ENCODE measurements at regions of chr2 and their contacts with region 1.

Region 1: DNA sequence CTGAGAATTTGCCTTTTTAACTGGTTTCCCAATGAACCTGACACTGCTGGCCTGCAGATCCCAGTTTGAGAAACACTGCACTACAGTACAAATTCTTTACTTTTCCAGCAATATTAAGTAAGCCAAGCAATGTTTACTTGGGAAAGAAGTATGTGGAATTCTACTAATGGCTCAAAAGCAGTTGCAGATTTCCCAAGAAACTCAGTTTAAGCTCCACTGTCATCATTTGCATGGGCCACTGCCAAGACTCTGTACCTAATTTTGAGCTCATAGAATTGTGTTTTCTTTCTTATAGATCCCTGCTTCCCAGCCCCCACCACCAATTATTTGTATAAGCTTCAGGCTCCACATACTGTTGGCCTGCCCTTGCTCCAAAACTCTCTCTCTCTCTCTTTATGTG is 676.1 kb downstream of the RNF144A start:
- DNase-seq: no peak
- H3K4me3 ChIP-seq: no peak overlapping the region
- H3K27ac ChIP-seq: no peak overlapping the region
- H3K4me1 ChIP-seq: no peaks in the 10 kb centered on the region
- H3K27me3 ChIP-seq: no peaks in the 10 kb centered on the region
- CTCF ChIP-seq: no peak
- POLR2A ChIP-seq: no peak

Region 2: DNA sequence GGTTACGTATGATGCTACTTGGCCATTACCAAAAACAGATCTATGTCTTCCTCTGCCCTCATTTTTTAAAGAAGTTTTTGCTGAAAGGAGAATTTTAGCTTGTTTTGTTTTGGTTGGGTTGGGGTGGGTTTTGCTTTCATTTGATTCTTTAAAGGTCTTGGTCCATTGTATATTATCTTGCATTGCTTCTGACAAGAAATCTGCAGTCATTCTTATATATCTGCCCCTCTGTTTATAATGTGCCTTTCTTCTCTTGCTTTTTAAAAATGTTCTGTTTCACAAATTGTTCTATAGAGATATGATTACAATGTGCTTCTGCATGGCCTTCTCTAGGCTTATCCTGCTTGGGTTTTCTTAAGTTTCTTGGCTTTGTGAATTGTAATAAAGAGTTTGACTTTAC is 15.6 kb before region 1 on chr2:
- intact Hi-C with region 1: loop called (anchors 2 kb)
- DNase-seq: no peak
- H3K4me3 ChIP-seq: no peak overlapping the region
- H3K27ac ChIP-seq: no peak overlapping the region
- H3K4me1 ChIP-seq: no peaks in the 10 kb centered on the region
- H3K27me3 ChIP-seq: no peaks in the 10 kb centered on the region
- CTCF ChIP-seq: no peak
- POLR2A ChIP-seq: no peak